ENCODE measurements at regions of chr3 and their contacts with region 1.

Region 1: GRCh38 chr3:52854013-52854412 is 19.2 kb upstream of the MUSTN1 start:
- DNase-seq: no peak
- ATAC-seq: no peak
- H3K4me3 Mint-ChIP-seq: no peak overlapping the region
- H3K27ac Mint-ChIP-seq: no peak overlapping the region
- H3K4me1 Mint-ChIP-seq: peaks cover 0 to 5% (median under 1%) of the 10 kb centered on the region in 4 donors
- H3K27me3 Mint-ChIP-seq: no peaks in the 10 kb centered on the region

Region 2: GRCh38 chr3:52831500-52832301 is 22.3 kb before region 1 on chr3:
- POLR2A ChIA-PET with region 1: no interaction called
- DNase-seq: no peak
- ATAC-seq: no peak
- H3K4me3 Mint-ChIP-seq: no peak overlapping the region
- H3K27ac Mint-ChIP-seq: no peak overlapping the region
- H3K4me1 Mint-ChIP-seq: peaks cover 0 to 2% (median under 1%) of the 10 kb centered on the region in 4 donors
- H3K27me3 Mint-ChIP-seq: no peaks in the 10 kb centered on the region

Region 3: GRCh38 chr3:53083521-53083920 is 229.5 kb after region 1 on chr3:
- POLR2A ChIA-PET with region 1: interaction called, 10 read pairs
- DNase-seq: no peak
- ATAC-seq: no peak
- H3K4me3 Mint-ChIP-seq: no peak overlapping the region
- H3K27ac Mint-ChIP-seq: peak overlapping the region in 4 of 10 donors; percentile 8 to 81 (median 29)
- H3K4me1 Mint-ChIP-seq: no peaks in the 10 kb centered on the region
- H3K27me3 Mint-ChIP-seq: no peaks in the 10 kb centered on the region

Measured in naive thymus-derived CD8-positive, alpha-beta T cell (primary cell).